ENCODE measurements at regions of chr11 and their contacts with region 1.

Region 1: DNA sequence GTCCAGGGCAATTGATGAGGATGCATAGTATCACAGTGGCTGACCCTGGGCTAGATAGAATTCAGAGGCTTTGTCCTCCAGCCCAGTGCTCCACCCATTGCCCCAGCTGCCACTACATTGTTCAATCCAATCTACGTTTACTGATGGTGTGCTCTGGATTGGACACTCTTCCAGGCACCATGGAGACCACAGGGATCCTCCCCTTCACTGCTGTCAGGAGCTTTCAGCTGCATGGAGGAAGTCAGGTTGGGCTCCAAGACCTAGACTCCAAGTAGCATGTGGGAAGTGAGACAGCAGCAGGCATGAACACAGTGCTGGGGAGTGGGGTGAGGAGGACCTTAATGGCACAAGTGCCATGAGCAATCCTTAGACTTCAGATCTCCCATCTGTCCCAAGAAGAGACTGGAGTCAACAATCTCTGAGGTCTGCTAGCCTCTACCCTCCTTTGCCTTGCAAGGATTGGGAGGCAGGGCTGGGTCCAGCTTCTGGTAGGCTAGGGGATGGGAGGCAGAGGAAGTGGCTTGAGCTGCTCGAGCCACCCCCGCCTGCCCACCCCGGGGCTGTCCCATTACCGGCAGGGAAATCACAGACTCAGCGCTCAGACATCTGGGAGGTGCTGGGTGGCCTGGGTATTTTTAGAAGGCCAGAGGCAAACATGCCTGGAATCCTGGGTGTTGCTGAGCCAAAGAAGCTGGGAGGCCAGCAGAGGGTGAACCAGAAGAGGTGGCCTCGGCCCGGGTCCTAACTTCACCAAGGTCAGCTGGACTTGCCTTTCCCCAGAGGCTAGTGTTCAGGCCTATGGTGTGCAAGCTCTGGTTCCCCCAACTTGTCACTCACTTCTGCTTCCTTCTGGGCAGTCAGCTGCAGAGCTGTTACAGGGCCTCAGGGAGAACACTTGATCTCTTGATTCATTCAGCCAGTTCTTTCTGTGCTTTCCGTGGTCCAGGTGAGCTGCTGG is 15.2 kb upstream of the FCHSD2 start:
- DNase-seq: peak; percentile 74
- ATAC-seq: peak; percentile 36
- H3K4me3 ChIP-seq: peak overlapping the region in 3 of 5 experiments; percentile 12 to 30 (median 17)
- H3K4me3 Mint-ChIP-seq: peak overlapping the region; percentile 77
- H3K27ac ChIP-seq: peak overlapping the region; percentile 86 to 94
- H3K27ac Mint-ChIP-seq: peak overlapping the region; percentile 95
- H3K4me1 ChIP-seq: peaks cover 91 to 94% of the 10 kb centered on the region in 2 donors
- H3K4me1 Mint-ChIP-seq: peaks cover 93% of the 10 kb centered on the region
- H3K27me3 ChIP-seq: no peaks in the 10 kb centered on the region
- H3K27me3 Mint-ChIP-seq: no peaks in the 10 kb centered on the region
- CTCF ChIP-seq: no peak

Region 2: DNA sequence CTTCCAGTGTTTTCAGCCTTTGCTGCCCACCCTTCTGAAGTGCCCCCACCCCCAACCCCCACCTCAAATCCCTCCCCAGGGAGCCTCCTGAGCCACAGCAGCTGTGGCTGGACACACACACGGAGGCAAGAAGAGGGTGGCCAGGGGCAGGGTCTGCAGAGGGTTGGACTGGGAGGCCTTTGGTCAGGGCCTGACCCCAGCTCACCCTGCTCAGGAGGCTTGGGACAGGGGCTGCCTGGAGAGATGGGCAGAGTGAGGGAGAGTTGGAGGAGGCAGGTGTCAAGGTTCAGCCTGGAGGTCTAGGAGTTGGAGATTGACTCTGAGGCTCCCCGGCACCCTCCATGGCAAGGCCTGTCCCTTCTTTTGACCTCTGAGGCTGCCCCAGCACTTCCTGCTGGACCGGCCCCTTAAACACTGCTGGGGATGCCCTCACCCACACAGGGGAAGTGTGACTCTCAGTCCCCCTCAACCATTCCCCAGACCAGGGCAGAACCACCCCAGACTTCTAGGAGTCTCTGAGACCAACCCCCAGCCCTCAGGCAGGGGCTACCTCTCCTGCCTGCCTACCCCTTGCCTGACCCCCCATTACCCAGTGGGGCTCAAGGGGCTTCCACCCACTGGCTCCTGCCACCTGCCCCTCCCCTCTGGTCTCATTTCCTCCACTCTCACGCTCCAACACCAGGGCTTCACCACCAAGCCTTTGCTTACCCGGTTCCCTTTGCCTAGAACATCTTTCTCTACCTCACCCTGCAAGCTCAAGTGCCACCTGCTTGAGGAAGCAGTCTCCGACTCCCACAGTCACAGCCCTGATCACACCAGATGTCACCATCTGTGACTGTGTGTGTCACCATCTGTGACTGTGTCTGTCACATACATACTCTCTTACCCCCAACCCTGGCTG is 413.8 kb before region 1 on chr11:
- CTCF ChIA-PET with region 1: no interaction called
- POLR2A ChIA-PET with region 1: no interaction called
- intact Hi-C with region 1: loop called (anchors 2 kb)
- DNase-seq: peak; percentile 90
- ATAC-seq: peak; percentile 81
- H3K4me3 ChIP-seq: no peak overlapping the region
- H3K4me3 Mint-ChIP-seq: peak overlapping the region; percentile 69
- H3K27ac ChIP-seq: peak overlapping the region; percentile 97 to 99
- H3K27ac Mint-ChIP-seq: peak overlapping the region; percentile 91
- H3K4me1 ChIP-seq: peaks cover 87 to 94% of the 10 kb centered on the region in 2 donors
- H3K4me1 Mint-ChIP-seq: peaks cover 89% of the 10 kb centered on the region
- H3K27me3 ChIP-seq: no peaks in the 10 kb centered on the region
- H3K27me3 Mint-ChIP-seq: no peaks in the 10 kb centered on the region
- CTCF ChIP-seq: no peak

Region 3: GRCh38 chr11:73070653-73071052 is 86.7 kb before region 1 on chr11:
- CTCF ChIA-PET with region 1: no interaction called
- POLR2A ChIA-PET with region 1: no interaction called
- intact Hi-C with region 1: no loop called
- DNase-seq: no peak
- ATAC-seq: no peak
- H3K4me3 ChIP-seq: no peak overlapping the region
- H3K4me3 Mint-ChIP-seq: no peak overlapping the region
- H3K27ac ChIP-seq: peak overlapping the region; percentile 25 to 83
- H3K27ac Mint-ChIP-seq: peak overlapping the region; percentile 42
- H3K4me1 ChIP-seq: peaks cover 45 to 62% of the 10 kb centered on the region in 2 donors
- H3K4me1 Mint-ChIP-seq: peaks cover 74% of the 10 kb centered on the region
- H3K27me3 ChIP-seq: no peaks in the 10 kb centered on the region
- H3K27me3 Mint-ChIP-seq: no peaks in the 10 kb centered on the region
- CTCF ChIP-seq: no peak

Region 4: GRCh38 chr11:73218106-73218829 is 60.9 kb after region 1 on chr11 and contains the start of gene P2RY2:
- CTCF ChIA-PET with region 1: no interaction called
- POLR2A ChIA-PET with region 1: no interaction called
- intact Hi-C with region 1: no loop called
- DNase-seq: peak; percentile 70
- ATAC-seq: peak; percentile 82
- H3K4me3 ChIP-seq: peak within 1 kb of the TSS; percentile 21 to 59 (median 45)
- H3K4me3 Mint-ChIP-seq: peak within 1 kb of the TSS; percentile 85
- H3K27ac ChIP-seq: no peak within 1 kb of the TSS
- H3K27ac Mint-ChIP-seq: peak within 1 kb of the TSS; percentile 53
- H3K4me1 ChIP-seq: peaks cover 23 to 25% of the 10 kb centered on the region in 2 donors
- H3K4me1 Mint-ChIP-seq: peaks cover 21% of the 10 kb centered on the region
- H3K27me3 ChIP-seq: peaks cover 0 to 31% (median 9%) of the 10 kb centered on the region in 4 experiments
- H3K27me3 Mint-ChIP-seq: peaks cover 27% of the 10 kb centered on the region
- CTCF ChIP-seq: peak; percentile 66
- total RNA-seq, gene P2RY2: 0.37 and 0.73 TPM in 2 replicates

Region 5: DNA sequence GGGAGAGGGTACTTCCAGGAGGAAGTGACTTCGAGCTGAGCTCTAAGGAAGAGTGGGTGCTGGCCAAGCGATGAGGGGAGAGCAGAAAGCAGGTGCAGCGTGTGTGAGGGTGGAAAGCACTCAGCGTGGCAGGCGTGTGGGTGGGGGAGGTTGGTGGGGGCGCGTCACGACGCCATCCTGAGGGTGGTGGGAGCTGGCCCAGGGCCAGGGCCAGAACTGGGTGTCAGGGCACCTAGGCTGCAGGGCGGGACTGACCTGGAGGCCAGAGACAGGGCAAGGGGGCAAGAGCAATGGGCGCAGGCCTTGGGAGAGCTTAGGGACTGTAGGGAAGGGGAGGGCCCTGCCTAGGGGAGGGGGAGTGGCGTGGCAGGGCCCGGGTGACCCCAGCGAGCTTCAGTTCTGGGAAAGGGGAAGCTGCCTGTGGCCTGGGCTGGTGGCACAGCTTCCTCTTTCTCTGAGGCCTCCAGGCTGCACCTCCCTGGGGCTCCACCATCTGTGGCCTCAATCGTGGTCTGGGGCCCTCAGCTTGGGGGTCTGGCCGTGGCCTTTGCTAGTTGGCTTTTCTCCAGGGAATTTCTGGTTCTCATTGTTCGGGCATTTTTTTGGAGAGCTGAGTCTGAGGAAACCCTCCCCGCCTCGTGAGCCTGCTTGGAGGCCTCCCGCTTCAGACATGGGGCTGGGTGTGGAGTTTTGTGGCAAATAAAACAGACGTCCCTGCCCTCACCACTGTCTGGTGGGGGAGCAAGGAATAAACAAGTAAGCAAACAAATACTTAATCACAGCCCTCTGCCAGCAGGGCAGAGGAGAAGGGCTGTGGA is 227.7 kb after region 1 on chr11:
- CTCF ChIA-PET with region 1: no interaction called
- POLR2A ChIA-PET with region 1: interaction called, 5 read pairs
- intact Hi-C with region 1: loop called (anchors 5 kb)
- DNase-seq: peak; percentile 96
- ATAC-seq: peak; percentile 69
- H3K4me3 ChIP-seq: peak overlapping the region in 4 of 5 experiments; percentile 31 to 58 (median 42)
- H3K4me3 Mint-ChIP-seq: peak overlapping the region; percentile 100
- H3K27ac ChIP-seq: peak overlapping the region; percentile 98
- H3K27ac Mint-ChIP-seq: peak overlapping the region; percentile 99
- H3K4me1 ChIP-seq: peaks cover 100% of the 10 kb centered on the region in 2 donors
- H3K4me1 Mint-ChIP-seq: peaks cover 99% of the 10 kb centered on the region
- H3K27me3 ChIP-seq: no peaks in the 10 kb centered on the region
- H3K27me3 Mint-ChIP-seq: no peaks in the 10 kb centered on the region
- CTCF ChIP-seq: no peak

Region 6: DNA sequence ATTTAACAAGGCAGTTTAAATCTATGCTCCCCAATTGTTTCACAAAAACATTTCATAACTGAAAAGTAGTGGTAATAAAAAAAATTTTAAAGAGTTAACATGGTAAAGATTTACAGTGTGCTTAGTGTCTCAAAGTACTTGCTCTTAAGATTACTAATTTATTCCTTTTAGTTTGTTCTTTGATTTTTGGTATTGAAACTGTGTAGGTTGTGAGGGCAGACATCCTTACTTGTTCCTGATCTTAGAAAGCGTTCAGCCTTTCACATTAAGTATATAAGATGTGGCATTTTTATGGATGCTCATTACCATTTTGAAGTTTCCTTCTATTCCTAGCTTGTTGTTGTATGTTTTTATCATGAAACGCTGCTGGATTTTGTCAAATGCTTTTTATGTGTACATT is 570.7 kb after region 1 on chr11:
- CTCF ChIA-PET with region 1: no interaction called
- POLR2A ChIA-PET with region 1: no interaction called
- intact Hi-C with region 1: no loop called
- DNase-seq: no peak
- ATAC-seq: no peak
- H3K4me3 ChIP-seq: no peak overlapping the region
- H3K4me3 Mint-ChIP-seq: no peak overlapping the region
- H3K27ac ChIP-seq: no peak overlapping the region
- H3K27ac Mint-ChIP-seq: no peak overlapping the region
- H3K4me1 ChIP-seq: no peaks in the 10 kb centered on the region
- H3K4me1 Mint-ChIP-seq: peaks cover 4% of the 10 kb centered on the region
- H3K27me3 ChIP-seq: no peaks in the 10 kb centered on the region
- H3K27me3 Mint-ChIP-seq: no peaks in the 10 kb centered on the region
- CTCF ChIP-seq: no peak

Measured in B cell (primary cell).